ENCODE measurements at regions of chr5 and their contacts with region 1.

Region 1: GRCh38 chr5:95961617-95962474 is at the start of gene ELL2:
- DNase-seq: peak; percentile 100
- ATAC-seq: peak; percentile 92
- H3K4me3 ChIP-seq: peak within 1 kb of the TSS; percentile 87
- H3K27ac ChIP-seq: peak within 1 kb of the TSS; percentile 99
- H3K4me1 ChIP-seq: peaks cover 30% of the 10 kb centered on the region
- H3K27me3 ChIP-seq: no peaks in the 10 kb centered on the region
- CTCF ChIP-seq: no peak
- total RNA-seq, gene ELL2: 52.1 TPM

Region 2: GRCh38 chr5:95858661-95859326 is 103.1 kb before region 1 on chr5:
- intact Hi-C with region 1: loop called (anchors 10 kb)
- DNase-seq: peak; percentile 95
- ATAC-seq: peak; percentile 88
- H3K4me3 ChIP-seq: peak overlapping the region; percentile 30
- H3K27ac ChIP-seq: peak overlapping the region; percentile 87
- H3K4me1 ChIP-seq: peaks cover 69% of the 10 kb centered on the region
- H3K27me3 ChIP-seq: no peaks in the 10 kb centered on the region
- CTCF ChIP-seq: peak; percentile 99

Region 3: GRCh38 chr5:96209829-96210228 is 248.0 kb after region 1 on chr5:
- intact Hi-C with region 1: no loop called
- DNase-seq: no peak
- ATAC-seq: no peak
- H3K4me3 ChIP-seq: no peak overlapping the region
- H3K27ac ChIP-seq: no peak overlapping the region
- H3K4me1 ChIP-seq: no peaks in the 10 kb centered on the region
- H3K27me3 ChIP-seq: no peaks in the 10 kb centered on the region
- CTCF ChIP-seq: no peak

Region 4: DNA sequence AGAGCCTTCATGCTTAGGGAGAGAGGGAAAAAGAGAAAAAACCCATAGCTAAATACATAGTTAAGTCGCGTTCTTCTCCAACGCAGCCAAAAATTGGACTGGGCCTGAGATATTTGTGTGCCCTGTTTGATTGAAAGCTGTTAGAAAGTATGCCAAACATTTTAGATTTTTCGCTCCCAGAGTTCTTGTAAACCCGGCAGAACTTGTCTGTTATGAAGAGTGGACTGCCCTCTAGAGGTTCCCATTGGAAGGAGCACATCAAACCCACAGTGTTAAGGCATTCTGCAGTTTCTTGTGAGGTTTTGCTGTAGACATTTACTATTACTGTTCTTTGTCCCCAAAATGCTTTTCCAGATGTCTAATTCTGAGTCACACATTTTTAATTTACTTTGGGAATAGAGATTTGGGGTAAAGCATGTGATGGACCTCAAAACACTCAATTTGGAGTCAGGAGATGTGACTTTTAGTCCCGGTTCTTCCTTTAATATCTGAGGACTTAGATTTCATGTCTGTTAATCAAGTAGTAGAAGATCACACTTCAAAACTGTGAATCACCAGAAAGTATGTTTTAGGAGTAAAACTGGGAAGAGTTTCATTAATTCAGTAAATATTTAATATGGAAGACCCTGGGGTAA is 374.6 kb after region 1 on chr5:
- intact Hi-C with region 1: loop called (anchors 5 kb)
- DNase-seq: no peak
- ATAC-seq: peak; percentile 95
- H3K4me3 ChIP-seq: no peak overlapping the region
- H3K27ac ChIP-seq: no peak overlapping the region
- H3K4me1 ChIP-seq: peaks cover 17% of the 10 kb centered on the region
- H3K27me3 ChIP-seq: no peaks in the 10 kb centered on the region
- CTCF ChIP-seq: peak; percentile 88

Region 5: GRCh38 chr5:96629774-96630173 is 667.9 kb after region 1 on chr5:
- intact Hi-C with region 1: no loop called
- DNase-seq: no peak
- ATAC-seq: peak; percentile 93
- H3K4me3 ChIP-seq: no peak overlapping the region
- H3K27ac ChIP-seq: no peak overlapping the region
- H3K4me1 ChIP-seq: peaks cover 12% of the 10 kb centered on the region
- H3K27me3 ChIP-seq: no peaks in the 10 kb centered on the region
- CTCF ChIP-seq: no peak

Measured in upper lobe of right lung (tissue), 1 donor.